ENCODE measurements at regions of chr10 and their contacts with region 1.

Region 1: DNA sequence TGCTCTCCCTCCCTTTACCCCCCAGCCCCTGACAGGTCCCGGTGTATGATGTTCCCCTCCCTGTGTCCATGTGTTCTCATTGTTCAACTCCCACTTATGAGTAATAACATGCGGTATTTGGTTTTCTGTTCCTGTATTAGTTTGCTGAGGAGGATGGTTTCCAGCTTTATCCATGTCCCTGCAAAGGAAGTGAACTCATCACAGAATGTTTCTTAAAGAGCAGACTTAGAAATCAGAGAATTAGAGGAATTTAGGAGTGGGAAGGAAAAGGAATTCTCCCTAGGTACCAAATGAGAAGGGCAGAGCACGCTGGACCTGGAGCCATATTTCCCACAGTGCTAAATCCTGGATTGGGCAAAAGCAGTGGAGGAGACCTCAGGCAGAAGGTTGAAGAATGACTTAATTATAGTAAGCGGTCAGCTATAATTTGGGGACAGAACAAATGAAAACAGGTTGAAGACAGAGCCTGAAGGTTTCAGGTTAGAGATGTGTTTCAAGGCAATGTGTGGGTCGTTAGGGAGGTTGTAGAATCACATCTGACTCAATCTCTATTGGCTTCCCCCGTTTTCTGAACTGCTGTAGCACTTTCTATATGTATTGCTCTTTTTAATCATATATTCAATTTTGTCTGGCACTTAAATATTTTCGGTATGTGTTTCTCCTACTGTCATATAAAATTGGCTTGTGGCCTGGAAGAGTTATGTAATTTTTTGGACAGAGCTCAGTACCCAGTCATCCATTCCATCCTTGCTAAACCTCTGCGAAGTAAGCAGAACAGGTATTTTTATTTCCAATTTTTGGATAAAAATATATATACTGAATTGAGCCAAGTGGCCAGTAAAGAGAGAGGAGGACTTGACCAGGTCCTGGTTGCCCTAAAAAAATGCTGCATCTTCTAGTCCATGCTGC is 210.5 kb upstream of the KLF6 start:
- DNase-seq: no peak
- H3K4me3 ChIP-seq: no peak overlapping the region
- H3K27ac ChIP-seq: no peak overlapping the region
- H3K4me1 ChIP-seq: no peaks in the 10 kb centered on the region
- H3K27me3 ChIP-seq: no peaks in the 10 kb centered on the region
- CTCF ChIP-seq: no peak

Region 2: DNA sequence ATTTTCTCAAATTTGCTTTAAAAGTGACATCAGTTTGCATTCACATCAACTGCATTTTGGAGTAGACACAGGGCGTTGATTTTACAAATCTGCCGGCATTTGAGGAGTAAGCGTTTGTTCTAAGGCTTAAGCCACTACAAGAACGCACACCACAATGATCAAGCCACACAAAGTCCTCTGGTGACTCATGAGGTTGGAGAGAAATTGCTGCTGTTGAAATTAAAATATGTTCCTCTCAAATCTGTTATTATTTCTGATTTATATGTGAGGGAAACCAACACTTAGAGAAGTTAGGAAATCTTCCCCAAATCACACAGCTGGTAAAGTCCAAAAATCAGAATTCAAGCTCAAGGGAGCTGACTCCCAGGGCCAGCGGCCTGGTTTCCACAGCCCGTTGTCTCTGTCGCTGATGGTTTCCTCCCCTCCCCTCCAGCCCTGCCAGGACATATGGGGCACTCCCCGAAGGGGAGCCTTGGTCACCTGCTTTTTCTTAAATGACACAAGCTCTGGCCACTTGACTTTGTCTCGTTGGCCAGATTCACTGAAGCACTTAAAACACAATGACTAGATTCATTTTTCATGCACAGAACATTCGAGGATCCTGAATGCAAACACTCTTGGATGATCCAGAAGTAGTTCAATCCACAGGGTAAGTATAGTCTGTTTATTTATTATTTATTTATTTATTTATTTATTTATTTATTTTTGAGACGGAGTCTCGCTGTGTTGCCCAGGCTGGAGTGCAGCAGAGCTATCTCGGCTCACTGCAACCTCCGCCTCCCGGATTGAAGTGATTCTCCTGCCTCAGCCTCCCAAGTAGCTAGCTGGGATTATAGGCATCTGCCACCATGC is 181.3 kb before region 1 on chr10:
- CTCF ChIA-PET with region 1: no interaction called
- POLR2A ChIA-PET with region 1: interaction called, 17 read pairs
- intact Hi-C with region 1: no loop called
- DNase-seq: no peak
- H3K4me3 ChIP-seq: no peak overlapping the region
- H3K27ac ChIP-seq: no peak overlapping the region
- H3K4me1 ChIP-seq: peaks cover 13% of the 10 kb centered on the region
- H3K27me3 ChIP-seq: no peaks in the 10 kb centered on the region
- CTCF ChIP-seq: no peak

Region 3: DNA sequence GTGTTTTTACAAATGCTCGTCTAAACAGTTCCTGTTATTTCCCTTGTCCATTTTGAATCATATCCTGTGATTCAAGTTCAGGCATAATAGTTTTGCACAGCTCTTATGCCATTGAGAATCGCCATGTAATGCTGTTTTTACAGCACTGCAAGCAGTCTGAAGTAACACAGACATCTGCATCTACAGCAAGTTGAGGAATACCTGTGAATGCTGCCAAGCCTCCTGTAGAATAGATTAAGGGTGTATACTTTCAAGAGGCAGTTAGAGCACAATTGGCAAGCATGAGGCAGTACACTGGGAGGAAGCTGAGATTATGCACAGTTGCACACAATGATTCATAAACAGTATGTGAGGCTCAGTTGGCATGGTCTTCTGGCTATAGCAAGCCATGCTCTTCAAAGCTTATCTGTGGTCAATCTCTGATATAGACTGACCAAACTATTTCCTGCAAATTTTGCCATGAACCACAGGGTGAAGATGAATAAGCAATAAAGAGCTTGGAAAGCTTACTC is 708.5 kb after region 1 on chr10:
- CTCF ChIA-PET with region 1: no interaction called
- POLR2A ChIA-PET with region 1: interaction called, 16 read pairs
- intact Hi-C with region 1: no loop called
- DNase-seq: peak; percentile 28
- H3K4me3 ChIP-seq: no peak overlapping the region
- H3K27ac ChIP-seq: no peak overlapping the region
- H3K4me1 ChIP-seq: no peaks in the 10 kb centered on the region
- H3K27me3 ChIP-seq: no peaks in the 10 kb centered on the region
- CTCF ChIP-seq: no peak